ENCODE measurements at regions of chr5 and their contacts with region 1.

Region 1: GRCh38 chr5:132495667-132496190 is 5.2 kb upstream of the IRF1 start:
- DNase-seq: peak; percentile 57 to 67 (median 60)
- H3K4me3 ChIP-seq: peak overlapping the region; percentile 73 to 94 (median 82)
- H3K4me3 Mint-ChIP-seq: peak overlapping the region; percentile 88 to 90
- H3K27ac ChIP-seq: peak overlapping the region; percentile 86 to 88
- H3K27ac Mint-ChIP-seq: peak overlapping the region; percentile 92 to 97 (median 96)
- H3K4me1 ChIP-seq: peaks cover 52 to 72% of the 10 kb centered on the region in 2 donors
- H3K4me1 Mint-ChIP-seq: peaks cover 68% of the 10 kb centered on the region
- H3K27me3 ChIP-seq: no peaks in the 10 kb centered on the region
- H3K27me3 Mint-ChIP-seq: peaks cover 0 to 2% (median 0%) of the 10 kb centered on the region in 3 donors
- CTCF ChIP-seq: no peak

Region 2: GRCh38 chr5:132464156-132464971 is 31.4 kb before region 1 on chr5:
- intact Hi-C with region 1: loop called in 1 of 2 experiments (anchors 5 kb)
- DNase-seq: no peak
- H3K4me3 ChIP-seq: peak overlapping the region in 1 of 3 experiments; percentile 67
- H3K4me3 Mint-ChIP-seq: peak overlapping the region; percentile 58 to 85
- H3K27ac ChIP-seq: peak overlapping the region; percentile 53 to 84
- H3K27ac Mint-ChIP-seq: peak overlapping the region; percentile 91 to 98 (median 96)
- H3K4me1 ChIP-seq: peaks cover 99 to 100% of the 10 kb centered on the region in 2 donors
- H3K4me1 Mint-ChIP-seq: peaks cover 100% of the 10 kb centered on the region
- H3K27me3 ChIP-seq: no peaks in the 10 kb centered on the region
- H3K27me3 Mint-ChIP-seq: peaks cover 0 to 8% (median 4%) of the 10 kb centered on the region in 3 donors
- CTCF ChIP-seq: no peak

Measured in CD14-positive monocyte (primary cell).